H1 (cell line): ENCODE measurements at regions of chr11 and their contacts with region 1.

Region 1: DNA sequence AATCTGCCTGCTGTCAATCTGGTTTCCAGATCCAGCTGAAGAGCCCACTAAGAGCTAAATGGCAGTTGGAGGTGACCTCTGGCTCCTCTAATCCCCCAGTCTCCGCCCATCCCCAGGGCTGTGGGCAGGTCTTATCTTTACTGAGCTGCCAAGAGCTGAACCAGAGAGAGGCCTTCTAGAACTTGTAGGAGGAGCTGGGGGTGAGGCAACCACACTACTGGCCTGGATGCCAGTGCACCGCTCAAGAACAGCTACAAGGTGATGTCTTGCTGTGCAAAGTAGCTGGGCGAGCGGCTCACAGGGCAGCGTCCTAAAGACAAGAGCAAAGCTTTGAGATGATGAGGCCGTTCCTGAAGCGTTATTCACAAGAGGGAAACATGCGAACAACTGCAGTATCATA is 374.6 kb downstream of the CTTN start:
- DNase-seq: no peak
- H3K4me3 ChIP-seq: no peak overlapping the region
- H3K27ac ChIP-seq: no peak overlapping the region
- H3K4me1 ChIP-seq: peaks cover 0 to 2% (median under 1%) of the 10 kb centered on the region in 4 experiments; a peak in 3 of 7 replicates
- H3K27me3 ChIP-seq: no peaks in the 10 kb centered on the region
- CTCF ChIP-seq: no peak
- EP300 ChIP-seq: no peak
- POLR2A ChIP-seq: no peak
- RAD21 ChIP-seq: no peak

Region 2: DNA sequence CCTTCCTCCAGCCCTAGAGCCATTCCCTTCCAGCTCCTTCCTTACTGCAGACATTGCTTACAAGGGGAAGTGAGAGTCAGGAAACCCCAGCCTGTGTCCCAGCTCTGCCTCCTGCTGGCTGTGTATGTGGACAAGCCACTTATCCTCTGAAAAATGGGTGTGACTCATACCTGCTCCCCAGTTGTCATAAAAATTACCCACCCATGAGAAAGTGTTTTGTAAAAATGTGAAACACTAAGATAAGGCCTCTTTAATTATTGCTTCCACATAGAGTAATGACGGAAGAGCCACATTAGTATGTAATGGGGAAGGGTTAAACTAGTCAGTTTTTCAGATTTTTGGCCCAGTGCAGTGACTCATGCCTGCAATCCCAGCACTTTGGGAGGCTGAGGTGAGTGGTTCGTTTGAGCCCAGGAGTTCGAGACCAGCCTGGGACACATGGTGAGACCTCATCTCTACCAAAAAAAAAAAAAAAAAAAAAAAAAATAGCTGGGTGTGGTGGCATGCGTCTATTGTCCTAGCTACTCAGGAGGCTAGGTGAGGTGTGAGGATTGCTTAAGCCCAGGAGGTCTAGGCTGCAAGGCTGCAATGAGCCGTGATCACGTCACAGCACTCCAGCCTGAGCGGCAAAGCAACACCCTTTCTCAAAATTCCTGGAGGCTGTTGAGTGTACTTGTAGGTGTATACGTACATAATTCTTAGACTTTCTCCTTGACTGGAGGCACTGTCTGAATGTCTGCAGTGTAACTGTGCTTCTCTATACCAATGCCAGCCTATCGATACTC is 289.7 kb before region 1 on chr11:
- CTCF ChIA-PET with region 1: no interaction called
- POLR2A ChIA-PET with region 1: no interaction called
- DNase-seq: no peak
- H3K4me3 ChIP-seq: no peak overlapping the region
- H3K27ac ChIP-seq: no peak overlapping the region
- H3K4me1 ChIP-seq: no peaks in the 10 kb centered on the region
- H3K27me3 ChIP-seq: no peaks in the 10 kb centered on the region
- CTCF ChIP-seq: peak; percentile 26 to 50 (median 45); a peak in 3 of 4 replicates
- EP300 ChIP-seq: no peak
- POLR2A ChIP-seq: no peak
- RAD21 ChIP-seq: peak; percentile 20 to 21; a peak in 2 of 4 replicates

Region 3: GRCh38 chr11:70790653-70791300 is 17.8 kb after region 1 on chr11:
- CTCF ChIA-PET with region 1: interaction called, 15 read pairs
- POLR2A ChIA-PET with region 1: interaction called, 3 read pairs
- DNase-seq: peak; percentile 19 to 66
- H3K4me3 ChIP-seq: no peak overlapping the region
- H3K27ac ChIP-seq: no peak overlapping the region
- H3K4me1 ChIP-seq: no peaks in the 10 kb centered on the region
- H3K27me3 ChIP-seq: no peaks in the 10 kb centered on the region; a peak in 1 of 7 replicates
- CTCF ChIP-seq: peak; percentile 75 to 83 (median 79)
- EP300 ChIP-seq: no peak
- POLR2A ChIP-seq: no peak
- RAD21 ChIP-seq: peak; percentile 76 to 80